A549 (cell line): ENCODE measurements at regions of chr6 and their contacts with region 1.

Region 1: GRCh38 chr6:159134701-159135364 is 34.4 kb upstream of the FNDC1 start:
- DNase-seq: peak; percentile 38 to 55
- ATAC-seq: peak; percentile 57 to 88; a peak in 5 of 6 replicates
- H3K4me3 ChIP-seq: no peak overlapping the region
- H3K27ac ChIP-seq: no peak overlapping the region
- H3K4me1 ChIP-seq: no peaks in the 10 kb centered on the region
- CTCF ChIP-seq: peak; percentile 70
- EP300 ChIP-seq: no peak
- POLR2A ChIP-seq: no peak
- RAD21 ChIP-seq: peak; percentile 64 to 75

Region 2: GRCh38 chr6:159008656-159009288 is 126.1 kb before region 1 on chr6:
- CTCF ChIA-PET with region 1: interaction called, 28 read pairs
- POLR2A ChIA-PET with region 1: no interaction called
- DNase-seq: peak; percentile 21 to 29
- ATAC-seq: peak in 1 of 2 experiments; percentile 60; a peak in 3 of 6 replicates
- H3K4me3 ChIP-seq: no peak overlapping the region
- H3K27ac ChIP-seq: no peak overlapping the region
- H3K4me1 ChIP-seq: no peaks in the 10 kb centered on the region
- CTCF ChIP-seq: peak; percentile 47
- EP300 ChIP-seq: no peak
- POLR2A ChIP-seq: no peak
- RAD21 ChIP-seq: peak; percentile 45 to 51

Region 3: GRCh38 chr6:159042003-159042825 is 92.6 kb before region 1 on chr6:
- CTCF ChIA-PET with region 1: interaction called, 12 read pairs
- POLR2A ChIA-PET with region 1: no interaction called
- DNase-seq: peak; percentile 62 to 64
- ATAC-seq: peak; percentile 87 to 95
- H3K4me3 ChIP-seq: no peak overlapping the region
- H3K27ac ChIP-seq: no peak overlapping the region
- H3K4me1 ChIP-seq: no peaks in the 10 kb centered on the region
- CTCF ChIP-seq: peak; percentile 78
- EP300 ChIP-seq: no peak
- POLR2A ChIP-seq: no peak
- RAD21 ChIP-seq: peak; percentile 58 to 67

Region 4: GRCh38 chr6:159104163-159104925 is 30.5 kb before region 1 on chr6:
- CTCF ChIA-PET with region 1: interaction called, 19 read pairs
- POLR2A ChIA-PET with region 1: no interaction called
- DNase-seq: peak; percentile 30 to 76
- ATAC-seq: peak; percentile 94 to 97
- H3K4me3 ChIP-seq: no peak overlapping the region
- H3K27ac ChIP-seq: no peak overlapping the region
- H3K4me1 ChIP-seq: no peaks in the 10 kb centered on the region
- CTCF ChIP-seq: peak; percentile 71
- EP300 ChIP-seq: no peak
- POLR2A ChIP-seq: no peak
- RAD21 ChIP-seq: peak; percentile 71 to 74

Region 5: GRCh38 chr6:159149641-159150040 is 14.8 kb after region 1 on chr6:
- CTCF ChIA-PET with region 1: interaction called, 16 read pairs
- POLR2A ChIA-PET with region 1: no interaction called
- DNase-seq: no peak
- ATAC-seq: no peak
- H3K4me3 ChIP-seq: no peak overlapping the region
- H3K27ac ChIP-seq: no peak overlapping the region
- H3K4me1 ChIP-seq: no peaks in the 10 kb centered on the region
- CTCF ChIP-seq: no peak
- EP300 ChIP-seq: no peak
- POLR2A ChIP-seq: no peak
- RAD21 ChIP-seq: no peak